CD8-positive, alpha-beta T cell (primary cell): ENCODE measurements at regions of chr7 and their contacts with region 1.

Region 1: DNA sequence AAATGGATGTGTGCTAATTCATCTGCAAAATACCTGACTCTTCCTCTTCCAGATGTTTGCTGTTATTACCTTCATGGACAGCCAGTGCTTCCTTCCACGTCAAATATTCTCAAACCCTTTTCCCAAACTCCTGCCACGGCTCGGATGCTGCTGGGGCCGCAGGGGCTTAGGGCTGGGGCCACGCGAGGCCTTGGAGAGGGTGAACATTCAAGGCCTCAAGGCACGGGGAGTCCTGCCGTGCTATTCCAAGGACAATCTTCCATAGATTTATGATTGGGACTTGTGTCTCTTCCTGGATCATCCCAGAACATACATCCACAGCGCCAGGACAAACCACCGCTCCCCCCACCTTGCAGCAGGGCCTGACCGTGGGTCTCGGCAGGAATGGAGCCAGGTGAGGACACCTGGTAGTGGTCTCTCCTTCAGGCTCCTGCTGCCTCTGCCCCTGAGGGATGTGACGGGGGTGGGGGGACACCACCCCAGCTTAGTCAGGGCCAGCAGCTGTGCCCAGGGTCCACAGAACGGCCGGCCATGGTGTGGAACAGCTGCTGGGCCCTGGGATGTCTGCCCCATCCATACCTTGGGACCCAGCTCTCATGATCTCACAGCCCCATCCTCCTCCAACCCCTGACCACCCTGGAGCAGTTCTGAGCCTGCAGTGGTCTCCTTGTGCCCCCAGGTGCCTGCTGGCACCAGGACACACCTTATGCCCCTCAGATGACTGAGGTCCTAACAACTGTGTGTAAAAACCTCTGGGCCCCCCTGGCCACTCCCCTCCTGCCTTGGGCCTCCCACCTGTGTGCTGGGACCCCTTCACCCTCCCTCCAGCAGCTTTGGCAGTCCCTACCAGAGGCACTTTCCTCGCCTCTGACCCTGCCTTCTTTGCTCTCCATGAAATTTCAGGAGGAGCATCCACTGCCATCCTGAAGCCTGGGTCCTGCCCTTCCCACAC is 16.7 kb downstream of the VIPR2 start:
- DNase-seq: no peak
- ATAC-seq: no peak
- H3K4me3 ChIP-seq: no peak overlapping the region
- H3K4me3 Mint-ChIP-seq: no peak overlapping the region
- H3K27ac ChIP-seq: no peak overlapping the region
- H3K27ac Mint-ChIP-seq: no peak overlapping the region
- H3K4me1 ChIP-seq: no peaks in the 10 kb centered on the region
- H3K4me1 Mint-ChIP-seq: no peaks in the 10 kb centered on the region
- H3K27me3 ChIP-seq: no peaks in the 10 kb centered on the region
- H3K27me3 Mint-ChIP-seq: peaks cover 8% of the 10 kb centered on the region
- CTCF ChIP-seq: no peak

Region 2: GRCh38 chr7:159158888-159159405 is 31.0 kb after region 1 on chr7:
- CTCF ChIA-PET with region 1: no interaction called
- POLR2A ChIA-PET with region 1: no interaction called
- intact Hi-C with region 1: loop called in 1 of 2 experiments (anchors 2 kb)
- DNase-seq: no peak
- ATAC-seq: no peak
- H3K4me3 ChIP-seq: no peak overlapping the region
- H3K4me3 Mint-ChIP-seq: no peak overlapping the region
- H3K27ac ChIP-seq: no peak overlapping the region
- H3K27ac Mint-ChIP-seq: no peak overlapping the region
- H3K4me1 ChIP-seq: no peaks in the 10 kb centered on the region
- H3K4me1 Mint-ChIP-seq: no peaks in the 10 kb centered on the region
- H3K27me3 ChIP-seq: no peaks in the 10 kb centered on the region
- H3K27me3 Mint-ChIP-seq: peaks cover 2% of the 10 kb centered on the region
- CTCF ChIP-seq: no peak